ENCODE measurements at regions of chr1 and their contacts with region 1.

Region 1: GRCh38 chr1:209761011-209761635 is 5.3 kb downstream of the TRAF3IP3 start:
- DNase-seq: no peak
- ATAC-seq: no peak
- H3K4me3 ChIP-seq: no peak overlapping the region
- H3K27ac ChIP-seq: no peak overlapping the region
- H3K4me1 ChIP-seq: peaks cover 21% of the 10 kb centered on the region
- H3K27me3 ChIP-seq: no peaks in the 10 kb centered on the region
- CTCF ChIP-seq: no peak
- EP300 ChIP-seq: no peak
- POLR2A ChIP-seq: no peak
- RAD21 ChIP-seq: no peak

Region 2: GRCh38 chr1:209774592-209774991 is 13.5 kb after region 1 on chr1:
- CTCF ChIA-PET with region 1: interaction called, 117 read pairs
- POLR2A ChIA-PET with region 1: interaction called, 107 read pairs
- RAD21 ChIA-PET with region 1: interaction called, 188 read pairs
- SMC1A ChIA-PET with region 1: interaction called, 282 read pairs
- in situ Hi-C with region 1: no loop called
- intact Hi-C with region 1: loop called (anchors 1 kb)
- DNase-seq: peak; percentile 32
- ATAC-seq: peak; percentile 82
- H3K4me3 ChIP-seq: peak overlapping the region; percentile 6
- H3K27ac ChIP-seq: peak overlapping the region; percentile 60
- H3K4me1 ChIP-seq: peaks cover 42% of the 10 kb centered on the region
- H3K27me3 ChIP-seq: no peaks in the 10 kb centered on the region
- CTCF ChIP-seq: no peak
- EP300 ChIP-seq: no peak; a peak in 1 of 4 replicates
- POLR2A ChIP-seq: no peak
- RAD21 ChIP-seq: no peak

Measured in GM12878 (cell line).